Vagina (tissue), 2 donors: ENCODE measurements at regions of chr16 and their contacts with region 1.

Region 1: DNA sequence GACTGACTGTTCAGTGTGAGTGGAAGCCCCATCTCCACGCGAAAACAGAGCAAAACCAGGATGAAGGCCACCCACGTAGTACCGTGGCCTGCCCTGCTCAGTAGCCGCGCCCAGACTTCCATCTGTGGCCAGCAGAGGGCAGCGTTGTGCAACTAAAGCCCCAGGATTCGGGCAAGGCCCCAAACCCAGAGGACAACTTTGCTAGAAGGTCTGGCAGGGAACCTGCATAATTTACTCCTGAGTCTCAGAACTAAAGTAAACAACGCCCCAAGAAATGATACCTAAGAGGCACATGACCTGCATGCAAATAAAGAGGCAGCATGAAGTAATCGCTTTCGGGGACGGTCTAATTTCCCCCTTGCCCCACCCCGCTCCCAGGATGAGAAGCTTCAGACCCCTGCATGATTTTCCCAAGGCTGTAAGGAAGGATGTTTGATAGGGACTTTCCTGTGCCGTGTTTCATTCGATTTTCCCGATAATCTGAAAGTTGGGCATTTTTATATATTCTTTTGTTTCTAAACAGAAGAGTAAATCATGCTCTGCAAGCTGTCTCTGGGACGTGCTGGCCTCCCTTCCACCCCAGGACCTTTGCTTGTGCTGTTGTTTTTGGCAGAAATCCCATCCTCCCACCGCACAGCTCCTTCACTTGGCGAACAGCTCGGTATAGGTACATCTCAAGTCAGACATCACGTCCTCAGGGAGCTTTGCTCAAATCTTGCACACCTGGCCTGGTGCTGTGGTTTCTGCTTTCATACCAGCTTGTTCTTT is 18.6 kb downstream of the HSBP1 start:
- DNase-seq: no peak
- H3K4me3 ChIP-seq: no peak overlapping the region
- H3K27ac ChIP-seq: no peak overlapping the region
- H3K4me1 ChIP-seq: no peaks in the 10 kb centered on the region
- H3K27me3 ChIP-seq: no peaks in the 10 kb centered on the region
- CTCF ChIP-seq: peak; percentile 67 to 95 (median 86)
- POLR2A ChIP-seq: no peak

Region 2: DNA sequence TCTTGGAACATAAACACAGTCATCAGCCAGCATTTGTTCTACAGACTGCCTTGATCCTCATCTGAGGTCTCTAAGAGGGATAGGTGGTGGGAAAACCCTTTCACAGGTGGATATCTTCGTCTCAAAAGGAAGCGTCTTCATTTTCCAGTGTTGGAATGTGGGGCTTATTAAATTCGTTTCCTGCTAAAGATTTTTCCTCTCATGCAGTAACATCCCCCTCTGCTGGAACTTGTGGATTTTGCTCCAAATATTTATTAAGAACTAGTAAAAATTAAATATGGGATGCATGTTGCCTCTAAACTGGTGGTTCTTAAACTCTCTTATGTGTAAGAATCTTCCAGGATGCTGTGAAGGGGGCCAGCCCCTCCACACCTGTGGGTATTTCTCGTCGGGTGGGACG is 52.5 kb after region 1 on chr16:
- intact Hi-C with region 1: loop called (anchors 10 kb)
- DNase-seq: no peak
- H3K4me3 ChIP-seq: no peak overlapping the region
- H3K27ac ChIP-seq: no peak overlapping the region
- H3K4me1 ChIP-seq: no peaks in the 10 kb centered on the region
- H3K27me3 ChIP-seq: no peaks in the 10 kb centered on the region
- CTCF ChIP-seq: peak in 2 of 3 experiments; percentile 24 to 42
- POLR2A ChIP-seq: no peak